A673 (cell line): ENCODE measurements at regions of chr11 and their contacts with region 1.

Region 1: GRCh38 chr11:68181719-68182451 is 31.2 kb downstream of the KMT5B start:
- DNase-seq: no peak
- H3K4me3 ChIP-seq: no peak overlapping the region
- H3K27ac ChIP-seq: no peak overlapping the region
- H3K4me1 ChIP-seq: no peaks in the 10 kb centered on the region
- H3K27me3 ChIP-seq: no peaks in the 10 kb centered on the region
- CTCF ChIP-seq: no peak

Region 2: GRCh38 chr11:68200639-68201038 is 18.8 kb after region 1 on chr11:
- CTCF ChIA-PET with region 1: interaction called, 4 read pairs
- POLR2A ChIA-PET with region 1: interaction called, 16 read pairs
- intact Hi-C with region 1: no loop called
- DNase-seq: peak; percentile 37
- H3K4me3 ChIP-seq: no peak overlapping the region
- H3K27ac ChIP-seq: peak overlapping the region; percentile 41
- H3K4me1 ChIP-seq: peaks cover 17% of the 10 kb centered on the region
- H3K27me3 ChIP-seq: no peaks in the 10 kb centered on the region
- CTCF ChIP-seq: no peak

Region 3: DNA sequence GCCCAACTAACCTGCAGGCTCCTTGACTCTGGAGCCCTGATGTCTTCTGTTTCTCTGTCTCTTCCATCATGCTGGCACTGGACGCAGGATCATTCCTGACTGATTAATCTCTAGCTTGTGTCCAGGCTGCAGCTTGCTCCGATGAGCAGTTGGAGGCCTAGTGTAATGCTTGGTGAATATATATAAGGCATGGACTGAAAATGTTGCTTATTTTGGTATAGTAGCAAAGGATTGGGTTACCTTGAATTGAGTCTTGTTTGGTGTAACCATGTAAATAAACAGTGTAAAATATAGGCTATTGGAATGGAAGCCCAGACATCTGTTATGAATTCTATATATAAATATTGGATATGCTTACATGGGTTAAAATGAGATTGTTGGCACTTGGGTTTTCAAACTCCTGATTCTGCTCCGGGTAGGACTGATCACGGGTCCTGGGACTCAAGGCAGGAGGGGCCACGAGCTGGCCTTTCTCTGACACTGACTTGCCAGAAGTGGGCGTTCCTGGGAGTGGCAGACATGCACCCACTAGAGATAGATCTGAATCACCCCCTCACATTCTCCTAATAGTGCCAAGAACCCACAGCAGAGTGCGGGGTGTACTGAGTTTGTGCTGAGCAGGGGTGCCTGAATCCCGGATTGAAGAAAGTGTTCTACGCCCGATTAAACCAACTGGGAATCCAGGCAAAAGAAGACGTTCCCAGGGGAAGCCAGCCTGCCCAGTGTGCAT is 156.3 kb after region 1 on chr11:
- CTCF ChIA-PET with region 1: no interaction called
- POLR2A ChIA-PET with region 1: no interaction called
- intact Hi-C with region 1: no loop called
- DNase-seq: no peak
- H3K4me3 ChIP-seq: no peak overlapping the region
- H3K27ac ChIP-seq: no peak overlapping the region
- H3K4me1 ChIP-seq: peaks cover 35% of the 10 kb centered on the region
- H3K27me3 ChIP-seq: no peaks in the 10 kb centered on the region
- CTCF ChIP-seq: no peak